ENCODE measurements at regions of chr1 and their contacts with region 1.

Region 1: GRCh38 chr1:29230553-29231378 is at the start of gene MECR:
- DNase-seq: peak; percentile 94 to 98 (median 97)
- ATAC-seq: peak; percentile 98
- H3K4me3 ChIP-seq: peak within 1 kb of the TSS; percentile 89
- H3K27ac ChIP-seq: peak within 1 kb of the TSS; percentile 79
- H3K4me1 ChIP-seq: peaks cover 3% of the 10 kb centered on the region
- H3K27me3 ChIP-seq: no peaks in the 10 kb centered on the region
- total RNA-seq, gene MECR: 21.0 to 33.7 (median 24.7) TPM

Region 2: DNA sequence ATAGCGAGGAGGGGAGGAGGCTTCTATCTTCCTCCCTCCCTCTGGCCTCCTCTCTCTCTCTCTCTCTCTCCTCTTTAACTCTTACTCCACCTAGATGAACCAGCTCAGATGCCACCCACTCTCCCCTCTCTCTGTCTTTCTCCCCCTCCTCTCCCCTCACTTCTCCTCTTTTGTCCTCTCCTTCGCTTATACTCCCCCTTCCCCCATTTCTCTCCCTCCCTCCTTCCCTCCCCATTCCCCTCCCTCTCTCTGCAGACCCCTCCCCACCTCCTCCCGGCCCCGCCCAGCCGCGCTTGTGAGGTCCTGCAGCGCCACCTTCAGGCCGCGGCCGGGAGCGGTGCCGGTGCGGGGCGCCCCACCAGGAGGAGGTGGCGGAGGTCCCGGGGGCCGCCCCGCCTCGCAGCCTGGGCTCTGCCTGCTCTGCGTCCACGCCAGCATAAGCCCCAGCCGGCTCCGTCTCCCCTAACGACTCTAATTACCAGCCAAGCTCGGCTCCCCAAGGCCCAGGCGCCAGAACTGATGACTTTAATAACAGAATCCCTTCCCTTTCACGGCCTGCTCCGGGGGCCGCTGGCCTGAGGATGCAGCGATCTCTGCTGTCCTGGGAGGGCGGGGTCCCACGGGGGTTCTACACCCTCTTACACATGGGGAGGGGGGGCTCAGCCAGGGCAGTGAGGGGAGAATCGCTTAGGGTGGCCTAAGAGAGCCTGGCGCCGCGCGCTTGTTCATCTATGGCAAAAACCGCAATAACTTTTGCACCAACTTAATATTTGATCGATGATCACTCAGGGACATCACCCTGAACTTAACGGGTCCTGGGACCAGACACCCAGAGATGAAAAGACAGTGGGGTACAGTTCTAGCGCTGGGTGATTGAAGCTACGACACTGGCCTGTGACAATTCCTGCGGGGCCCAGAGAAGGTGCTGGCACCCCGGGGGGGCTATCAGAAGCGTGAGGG is 855.3 kb after region 1 on chr1:
- intact Hi-C with region 1: loop called in 3 of 4 experiments (anchors 10 kb)
- DNase-seq: peak; percentile 65 to 88 (median 87)
- ATAC-seq: peak; percentile 38 to 59
- H3K4me3 ChIP-seq: no peak overlapping the region
- H3K27ac ChIP-seq: no peak overlapping the region
- H3K4me1 ChIP-seq: peaks cover 8% of the 10 kb centered on the region
- H3K27me3 ChIP-seq: no peaks in the 10 kb centered on the region

Region 3: GRCh38 chr1:30111431-30111830 is 880.7 kb after region 1 on chr1:
- intact Hi-C with region 1: loop called in 1 of 4 experiments (anchors 10 kb)
- DNase-seq: peak; percentile 55 to 71 (median 63)
- ATAC-seq: peak; percentile 65 to 77
- H3K4me3 ChIP-seq: no peak overlapping the region
- H3K27ac ChIP-seq: no peak overlapping the region
- H3K4me1 ChIP-seq: no peaks in the 10 kb centered on the region
- H3K27me3 ChIP-seq: no peaks in the 10 kb centered on the region

Region 4: GRCh38 chr1:30379684-30380624 is 1149.2 kb after region 1 on chr1:
- intact Hi-C with region 1: loop called in 2 of 4 experiments (anchors 5 to 10 kb)
- DNase-seq: no peak
- ATAC-seq: peak; percentile 54 to 72
- H3K4me3 ChIP-seq: no peak overlapping the region
- H3K27ac ChIP-seq: no peak overlapping the region
- H3K4me1 ChIP-seq: no peaks in the 10 kb centered on the region
- H3K27me3 ChIP-seq: no peaks in the 10 kb centered on the region

Region 5: DNA sequence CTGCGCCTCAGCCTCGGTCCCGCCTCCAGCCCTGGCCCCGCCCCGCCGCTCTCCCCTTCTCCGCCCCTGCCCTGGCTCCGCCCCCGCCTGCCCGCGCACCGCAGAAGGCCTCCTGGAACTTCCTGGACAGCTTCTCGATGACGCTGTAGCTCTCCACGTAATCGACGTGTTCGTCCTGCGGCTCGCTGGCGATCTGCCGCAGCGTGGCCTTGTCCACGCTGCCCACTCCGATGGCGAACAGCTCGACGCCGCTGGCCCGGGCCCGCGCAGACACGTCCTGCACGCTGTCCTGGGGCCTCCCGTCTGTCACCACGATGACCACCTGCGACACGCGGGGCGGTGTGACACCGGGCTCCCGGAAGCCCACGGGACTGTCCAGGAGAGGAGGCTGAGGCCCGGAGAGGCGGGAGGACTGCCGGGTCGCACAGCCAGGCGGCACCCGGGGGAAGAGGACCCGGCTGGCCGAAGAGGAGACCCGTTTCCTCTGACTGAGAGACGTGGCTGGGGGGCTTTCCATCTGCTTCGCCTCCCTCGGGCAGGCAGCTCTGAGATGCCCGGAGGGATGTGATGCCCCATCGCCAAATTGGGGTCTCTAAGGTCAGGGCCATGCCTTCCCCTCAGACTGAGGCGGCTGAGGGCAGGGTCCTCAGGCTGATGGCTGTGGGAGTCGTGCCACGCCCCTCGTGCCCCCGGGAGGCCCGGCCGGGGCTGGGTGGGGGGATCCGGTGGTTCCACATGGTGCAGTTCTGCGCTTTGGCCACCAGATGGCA is 1488.1 kb after region 1 on chr1:
- intact Hi-C with region 1: loop called in 1 of 4 experiments (anchors 10 kb)
- DNase-seq: peak; percentile 80 to 93 (median 90)
- ATAC-seq: peak; percentile 89
- H3K4me3 ChIP-seq: peak overlapping the region; percentile 19
- H3K27ac ChIP-seq: peak overlapping the region; percentile 96
- H3K4me1 ChIP-seq: no peaks in the 10 kb centered on the region
- H3K27me3 ChIP-seq: no peaks in the 10 kb centered on the region

Measured in right cardiac atrium (tissue), 5 donors.